Activated CD8-positive, alpha-beta T cell treated with anti-CD3 and anti-CD28 coated beads, Interleukin-2, amount 10 ng/mL, durations not matched to agents 7 days and 5 days (primary cell): ENCODE measurements at regions of chrX and their contacts with region 1.

Region 1: GRCh38 chrX:71652405-71652804 is 14.9 kb upstream of the LOC101059915 start:
- DNase-seq: peak; percentile 76
- ATAC-seq: peak; percentile 71
- H3K4me3 Mint-ChIP-seq: no peak overlapping the region
- H3K27ac Mint-ChIP-seq: peak overlapping the region; percentile 42
- H3K4me1 Mint-ChIP-seq: peaks cover 45% of the 10 kb centered on the region
- H3K27me3 Mint-ChIP-seq: peaks cover 3% of the 10 kb centered on the region

Region 2: GRCh38 chrX:71525316-71525715 is 127.1 kb before region 1 on chrX:
- CTCF ChIA-PET with region 1: no interaction called
- POLR2A ChIA-PET with region 1: no interaction called
- DNase-seq: no peak
- ATAC-seq: no peak
- H3K4me3 Mint-ChIP-seq: no peak overlapping the region
- H3K27ac Mint-ChIP-seq: no peak overlapping the region
- H3K4me1 Mint-ChIP-seq: peaks cover 5% of the 10 kb centered on the region
- H3K27me3 Mint-ChIP-seq: no peaks in the 10 kb centered on the region

Region 3: DNA sequence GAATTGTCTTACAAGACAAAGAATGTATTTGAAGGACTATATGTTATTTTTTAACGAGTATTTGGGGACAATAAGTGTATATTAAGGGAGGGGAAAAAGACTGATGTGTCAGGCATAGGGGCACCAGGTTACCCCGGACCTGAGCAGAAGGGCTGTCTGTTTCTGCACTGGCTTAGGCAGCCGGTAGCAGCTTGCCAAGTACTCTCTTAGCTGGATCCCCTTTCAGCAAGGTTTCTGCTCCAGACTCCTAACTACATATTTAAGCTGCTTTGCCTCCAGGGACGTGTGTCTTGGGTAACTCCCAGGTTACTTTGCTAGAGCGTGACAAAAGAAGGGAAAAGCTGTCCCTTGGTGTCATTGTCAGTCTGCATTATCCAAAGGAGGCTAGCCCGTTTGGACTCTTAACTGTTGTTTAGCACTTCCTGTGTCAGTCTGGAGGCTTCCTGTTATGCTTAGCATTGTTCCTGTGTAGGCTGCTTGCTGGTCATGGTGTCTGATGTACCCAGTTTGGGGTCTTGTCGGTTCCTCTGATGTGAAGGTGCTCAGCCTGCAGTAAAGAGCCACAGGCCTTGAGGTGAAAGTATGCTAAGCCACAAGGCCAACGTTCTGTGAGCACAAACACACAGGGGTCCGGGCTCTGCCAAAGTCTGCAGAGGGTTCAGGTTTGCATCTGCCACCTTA is 45.7 kb before region 1 on chrX:
- CTCF ChIA-PET with region 1: interaction called, 11 read pairs
- POLR2A ChIA-PET with region 1: no interaction called
- DNase-seq: peak; percentile 68
- ATAC-seq: peak; percentile 89
- H3K4me3 Mint-ChIP-seq: peak overlapping the region; percentile 27
- H3K27ac Mint-ChIP-seq: peak overlapping the region; percentile 96
- H3K4me1 Mint-ChIP-seq: peaks cover 82% of the 10 kb centered on the region
- H3K27me3 Mint-ChIP-seq: no peaks in the 10 kb centered on the region